ENCODE measurements at regions of chr18 and their contacts with region 1.

Region 1: DNA sequence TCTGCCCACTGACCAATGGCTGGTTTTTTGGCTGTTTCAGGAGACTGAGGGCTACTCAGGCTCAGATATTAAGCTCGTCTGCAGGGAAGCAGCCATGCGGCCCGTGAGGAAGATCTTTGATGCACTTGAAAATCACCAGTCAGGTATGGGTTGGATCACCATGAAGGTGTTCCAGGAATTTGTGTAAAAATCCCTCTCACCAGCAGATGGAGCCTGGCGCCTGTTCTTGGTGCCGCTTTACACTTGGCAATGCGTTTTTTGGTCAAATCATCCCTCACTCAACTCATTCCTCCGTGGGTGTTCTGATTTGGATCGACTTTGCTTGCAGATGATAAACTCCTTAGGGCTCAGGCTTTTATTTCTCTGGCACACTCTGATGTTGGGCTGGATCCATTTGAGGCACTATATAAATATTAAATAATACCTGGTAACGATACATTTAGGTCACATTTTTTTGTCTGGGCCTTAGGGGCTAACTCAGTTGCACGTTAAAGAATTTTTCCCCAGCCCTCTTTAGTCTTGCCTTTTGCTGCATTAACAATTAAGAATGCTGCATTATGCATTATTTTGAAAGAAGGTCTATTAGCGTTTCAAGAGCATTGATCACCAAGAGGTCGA is 50.0 kb downstream of the HDHD2 start:
- DNase-seq: peak; percentile 56 to 72 (median 64)
- ATAC-seq: peak; percentile 81
- H3K4me3 ChIP-seq: no peak overlapping the region
- H3K27ac ChIP-seq: no peak overlapping the region
- H3K4me1 ChIP-seq: no peaks in the 10 kb centered on the region
- H3K27me3 ChIP-seq: no peaks in the 10 kb centered on the region
- CTCF ChIP-seq: peak; percentile 60 to 82 (median 77)
- POLR2A ChIP-seq: no peak

Region 2: GRCh38 chr18:47204908-47205522 is 104.7 kb after region 1 on chr18:
- intact Hi-C with region 1: loop called (anchors 5 kb)
- DNase-seq: peak; percentile 42 to 62 (median 54)
- ATAC-seq: peak; percentile 52
- H3K4me3 ChIP-seq: no peak overlapping the region
- H3K27ac ChIP-seq: no peak overlapping the region
- H3K4me1 ChIP-seq: no peaks in the 10 kb centered on the region
- H3K27me3 ChIP-seq: no peaks in the 10 kb centered on the region
- CTCF ChIP-seq: peak; percentile 73 to 89 (median 86)
- POLR2A ChIP-seq: no peak

Region 3: GRCh38 chr18:47748847-47749599 is 648.7 kb after region 1 on chr18:
- intact Hi-C with region 1: loop called (anchors 10 kb)
- DNase-seq: peak; percentile 67 to 85 (median 78)
- ATAC-seq: peak; percentile 96
- H3K4me3 ChIP-seq: no peak overlapping the region
- H3K27ac ChIP-seq: no peak overlapping the region
- H3K4me1 ChIP-seq: peaks cover 5% of the 10 kb centered on the region
- H3K27me3 ChIP-seq: no peaks in the 10 kb centered on the region
- CTCF ChIP-seq: peak; percentile 91 to 100 (median 100)
- POLR2A ChIP-seq: no peak